RWPE1 (cell line): ENCODE measurements at regions of chr17 and their contacts with region 1.

Region 1: DNA sequence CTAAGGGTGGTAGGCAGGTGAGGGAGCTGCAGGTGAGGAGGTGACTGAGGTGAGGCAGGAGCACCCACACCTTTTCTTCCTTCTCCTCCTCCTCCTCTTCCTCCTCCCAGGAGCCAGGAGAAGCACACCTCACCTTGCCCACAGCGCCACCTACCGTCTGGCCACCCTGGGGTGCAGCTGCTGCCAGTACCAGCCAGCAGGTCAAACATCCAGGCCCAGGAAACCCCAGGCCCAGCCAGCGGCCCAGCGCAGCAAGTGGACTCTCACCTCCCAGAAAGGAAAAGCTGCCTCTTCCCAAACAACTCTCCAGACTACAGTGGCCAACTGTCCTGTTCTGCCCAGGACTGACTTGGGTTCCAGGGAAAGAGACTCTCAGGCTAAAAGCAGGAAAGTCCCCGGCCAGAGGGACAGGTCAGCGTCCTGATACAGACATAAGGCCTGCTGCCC is 22.7 kb downstream of the PEMT start:
- DNase-seq: peak; percentile 70
- H3K27ac ChIP-seq: no peak overlapping the region
- CTCF ChIP-seq: peak; percentile 69

Region 2: DNA sequence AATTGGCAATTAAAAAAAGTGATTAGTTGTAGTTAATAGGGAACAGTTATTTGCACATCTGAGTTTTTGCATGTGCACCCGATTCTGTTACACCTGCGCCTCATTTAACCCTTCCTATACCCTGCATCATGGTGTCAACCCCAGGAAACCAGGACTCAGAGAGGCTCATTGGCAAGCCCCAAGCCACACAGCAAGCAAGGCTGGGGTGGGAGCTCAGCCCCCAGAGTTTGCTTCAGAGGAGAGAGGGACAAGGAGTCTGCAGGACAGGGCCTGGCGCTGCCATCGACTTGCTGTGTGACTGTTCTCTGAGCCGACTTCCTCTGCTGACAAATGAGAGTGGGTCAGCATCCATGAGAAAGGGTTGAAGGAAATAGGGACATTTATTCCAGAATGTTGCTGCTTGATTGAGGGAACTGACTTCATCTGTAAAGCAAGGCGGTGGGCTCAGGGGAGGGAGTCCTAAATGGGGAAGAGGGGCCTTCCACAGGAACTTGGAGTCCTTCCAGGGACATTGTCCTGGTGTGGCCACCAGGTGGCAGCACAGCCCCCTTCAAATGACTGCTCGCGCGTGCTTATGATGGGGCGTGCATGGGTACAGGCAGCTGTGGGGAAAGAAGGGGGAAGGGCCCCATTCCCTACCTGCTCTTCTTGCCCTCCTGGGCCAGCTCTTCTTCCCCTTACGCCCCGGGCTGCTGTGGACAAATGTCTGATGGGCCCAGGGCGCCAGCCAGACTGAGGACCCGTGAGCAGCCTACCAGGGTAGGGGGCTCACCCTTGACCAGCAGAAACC is 214.0 kb before region 1 on chr17:
- CTCF ChIA-PET with region 1: interaction called, 12 read pairs
- POLR2A ChIA-PET with region 1: no interaction called
- DNase-seq: peak; percentile 74
- H3K27ac ChIP-seq: no peak overlapping the region
- CTCF ChIP-seq: peak; percentile 85

Region 3: GRCh38 chr17:17496189-17497064 is 72.3 kb before region 1 on chr17 and contains the start of gene RASD1:
- CTCF ChIA-PET with region 1: interaction called, 26 read pairs
- POLR2A ChIA-PET with region 1: interaction called, 12 read pairs
- DNase-seq: peak; percentile 92
- H3K27ac ChIP-seq: peak within 1 kb of the TSS; percentile 38
- CTCF ChIP-seq: peak; percentile 97

Region 4: GRCh38 chr17:17739388-17740066 is 170.8 kb after region 1 on chr17:
- CTCF ChIA-PET with region 1: no interaction called
- POLR2A ChIA-PET with region 1: no interaction called
- DNase-seq: peak; percentile 60
- H3K27ac ChIP-seq: peak overlapping the region; percentile 97
- CTCF ChIP-seq: no peak